Activated T-helper 1 cell treated with anti-CD3 and anti-CD28 coated beads, Interleukin-12 subunit alpha, Interleukin-12 subunit beta, Interleukin-2, Interleukin-4 antibody, amounts not matched to agents 30 ng/mL and 10 ng/mL and 1 ng/mL, durations not matched to agents 14 hours and 24 hours and 36 hours (primary cell): ENCODE measurements at regions of chr16 and their contacts with region 1.

Region 1: GRCh38 chr16:74709441-74709877 is 8.8 kb upstream of the MLKL start:
- DNase-seq: peak; percentile 67
- H3K4me3 Mint-ChIP-seq: no peak overlapping the region
- H3K27ac Mint-ChIP-seq: no peak overlapping the region
- H3K4me1 Mint-ChIP-seq: peaks cover 7% of the 10 kb centered on the region
- H3K27me3 Mint-ChIP-seq: no peaks in the 10 kb centered on the region

Region 2: GRCh38 chr16:74296432-74297144 is 412.9 kb before region 1 on chr16 and contains the start of gene PSMD7:
- intact Hi-C with region 1: loop called (anchors 10 kb)
- DNase-seq: peak; percentile 88
- H3K4me3 Mint-ChIP-seq: peak within 1 kb of the TSS; percentile 90
- H3K27ac Mint-ChIP-seq: peak within 1 kb of the TSS; percentile 93
- H3K4me1 Mint-ChIP-seq: peaks cover 27% of the 10 kb centered on the region
- H3K27me3 Mint-ChIP-seq: no peaks in the 10 kb centered on the region
- total RNA-seq, gene PSMD7: 168 and 175 TPM in 2 replicates

Region 3: DNA sequence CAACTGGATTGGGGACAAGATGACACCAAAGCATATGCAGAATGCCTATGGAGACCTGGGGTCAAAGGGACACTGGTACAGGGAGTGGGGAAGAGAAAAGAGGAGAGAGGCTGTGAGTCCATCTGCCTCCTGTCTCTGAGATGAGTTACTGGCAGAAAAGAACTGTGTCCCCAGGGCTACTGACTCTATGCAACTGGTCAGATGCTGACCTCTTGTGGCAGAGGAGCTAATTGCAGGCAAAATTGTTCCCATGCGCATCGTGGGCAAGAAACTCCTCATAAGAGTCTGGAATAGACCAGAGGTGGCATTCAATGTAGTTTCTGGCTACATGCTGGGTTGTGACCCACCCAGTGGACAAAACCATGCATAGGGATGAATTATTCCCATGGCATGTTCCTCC is 17.3 kb after region 1 on chr16:
- intact Hi-C with region 1: loop called (anchors 1 kb)
- DNase-seq: no peak
- H3K4me3 Mint-ChIP-seq: no peak overlapping the region
- H3K27ac Mint-ChIP-seq: no peak overlapping the region
- H3K4me1 Mint-ChIP-seq: peaks cover 4% of the 10 kb centered on the region
- H3K27me3 Mint-ChIP-seq: no peaks in the 10 kb centered on the region

Region 4: GRCh38 chr16:74813109-74813641 is 103.7 kb after region 1 on chr16:
- intact Hi-C with region 1: loop called (anchors 1 kb)
- DNase-seq: peak; percentile 63
- H3K4me3 Mint-ChIP-seq: no peak overlapping the region
- H3K27ac Mint-ChIP-seq: no peak overlapping the region
- H3K4me1 Mint-ChIP-seq: no peaks in the 10 kb centered on the region
- H3K27me3 Mint-ChIP-seq: peaks cover 4% of the 10 kb centered on the region

Region 5: DNA sequence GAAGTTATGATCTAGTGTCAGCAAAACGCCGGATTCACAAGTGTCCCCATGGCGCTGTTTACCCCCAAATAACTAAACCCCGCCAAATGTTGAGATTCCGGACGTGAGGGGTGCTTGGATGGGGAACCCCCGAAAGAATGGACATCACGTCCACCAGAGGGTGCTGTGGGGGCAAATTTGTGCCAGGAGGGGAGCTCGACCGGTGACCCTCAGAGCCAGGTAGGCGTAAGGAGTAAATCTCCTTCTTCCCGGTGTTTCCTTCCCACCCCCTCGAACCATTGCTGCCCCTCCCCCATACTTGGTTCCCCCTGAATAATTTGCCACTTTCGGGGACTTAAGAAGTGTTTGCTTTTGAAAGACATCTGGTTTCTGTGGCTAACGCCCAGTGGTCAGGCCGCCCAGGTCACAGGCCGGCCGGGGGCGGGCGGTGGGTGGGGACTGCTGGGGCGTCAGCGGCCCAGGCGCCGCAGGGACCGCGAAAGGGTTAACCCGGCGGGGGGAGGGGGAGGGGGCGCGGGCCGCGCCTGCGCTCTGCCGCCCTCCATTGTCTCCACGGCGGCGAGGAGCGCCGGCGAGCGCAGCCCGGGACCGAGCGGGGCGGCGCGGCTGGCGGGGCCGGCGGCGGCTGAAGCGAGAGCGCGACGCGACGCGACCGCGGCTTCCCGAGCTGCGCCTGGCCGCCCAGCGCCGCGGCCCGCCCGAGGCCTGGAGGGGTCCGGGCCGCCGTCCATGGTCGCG is 289.2 kb after region 1 on chr16 and contains the start of gene ZNRF1:
- intact Hi-C with region 1: loop called (anchors 5 kb)
- DNase-seq: peak; percentile 74
- H3K4me3 Mint-ChIP-seq: peak within 1 kb of the TSS; percentile 91
- H3K27ac Mint-ChIP-seq: peak within 1 kb of the TSS; percentile 86
- H3K4me1 Mint-ChIP-seq: peaks cover 43% of the 10 kb centered on the region
- H3K27me3 Mint-ChIP-seq: peaks cover 2% of the 10 kb centered on the region
- total RNA-seq, gene ZNRF1: 51.2 and 52.2 TPM in 2 replicates

Region 6: GRCh38 chr16:75198135-75198600 is 488.7 kb after region 1 on chr16:
- intact Hi-C with region 1: loop called (anchors 1 kb)
- DNase-seq: no peak
- H3K4me3 Mint-ChIP-seq: no peak overlapping the region
- H3K27ac Mint-ChIP-seq: no peak overlapping the region
- H3K4me1 Mint-ChIP-seq: peaks cover 11% of the 10 kb centered on the region
- H3K27me3 Mint-ChIP-seq: peaks cover 35% of the 10 kb centered on the region

Region 7: GRCh38 chr16:75555707-75556430 is 846.4 kb after region 1 on chr16 and contains the start of gene TMEM231:
- intact Hi-C with region 1: loop called (anchors 10 kb)
- DNase-seq: peak; percentile 95
- H3K4me3 Mint-ChIP-seq: peak within 1 kb of the TSS; percentile 92
- H3K27ac Mint-ChIP-seq: peak within 1 kb of the TSS; percentile 89
- H3K4me1 Mint-ChIP-seq: peaks cover 11% of the 10 kb centered on the region
- H3K27me3 Mint-ChIP-seq: peaks cover 7% of the 10 kb centered on the region
- total RNA-seq, gene TMEM231: 4.5 and 4.7 TPM in 2 replicates